ENCODE measurements at regions of chr9 and their contacts with region 1.

Region 1: GRCh38 chr9:105881654-105882349 is 187.5 kb downstream of the TMEM38B start:
- DNase-seq: peak; percentile 26 to 71 (median 59)
- ATAC-seq: no peak
- H3K4me3 ChIP-seq: no peak overlapping the region
- H3K4me3 Mint-ChIP-seq: no peak overlapping the region
- H3K27ac ChIP-seq: no peak overlapping the region
- H3K27ac Mint-ChIP-seq: no peak overlapping the region
- H3K4me1 ChIP-seq: no peaks in the 10 kb centered on the region
- H3K4me1 Mint-ChIP-seq: peaks cover 4% of the 10 kb centered on the region
- H3K27me3 ChIP-seq: no peaks in the 10 kb centered on the region
- H3K27me3 Mint-ChIP-seq: no peaks in the 10 kb centered on the region
- CTCF ChIP-seq: peak; percentile 74

Region 2: GRCh38 chr9:105608721-105609598 is 272.8 kb before region 1 on chr9:
- CTCF ChIA-PET with region 1: interaction called, 6 read pairs
- POLR2A ChIA-PET with region 1: no interaction called
- intact Hi-C with region 1: loop called (anchors 1 to 2 kb)
- DNase-seq: peak in 2 of 9 experiments; percentile 47 to 61
- ATAC-seq: no peak
- H3K4me3 ChIP-seq: no peak overlapping the region
- H3K4me3 Mint-ChIP-seq: no peak overlapping the region
- H3K27ac ChIP-seq: no peak overlapping the region
- H3K27ac Mint-ChIP-seq: no peak overlapping the region
- H3K4me1 ChIP-seq: no peaks in the 10 kb centered on the region
- H3K4me1 Mint-ChIP-seq: no peaks in the 10 kb centered on the region
- H3K27me3 ChIP-seq: no peaks in the 10 kb centered on the region
- H3K27me3 Mint-ChIP-seq: no peaks in the 10 kb centered on the region
- CTCF ChIP-seq: peak; percentile 70

Region 3: GRCh38 chr9:105842023-105842644 is 39.7 kb before region 1 on chr9:
- CTCF ChIA-PET with region 1: interaction called, 93 read pairs
- POLR2A ChIA-PET with region 1: no interaction called
- intact Hi-C with region 1: loop called (anchors 1 kb)
- DNase-seq: peak in 4 of 9 experiments; percentile 7 to 37 (median 10)
- ATAC-seq: no peak
- H3K4me3 ChIP-seq: no peak overlapping the region
- H3K4me3 Mint-ChIP-seq: no peak overlapping the region
- H3K27ac ChIP-seq: no peak overlapping the region
- H3K27ac Mint-ChIP-seq: no peak overlapping the region
- H3K4me1 ChIP-seq: no peaks in the 10 kb centered on the region
- H3K4me1 Mint-ChIP-seq: no peaks in the 10 kb centered on the region
- H3K27me3 ChIP-seq: no peaks in the 10 kb centered on the region
- H3K27me3 Mint-ChIP-seq: peaks cover 2% of the 10 kb centered on the region
- CTCF ChIP-seq: peak; percentile 83

Measured in CD8-positive, alpha-beta T cell (primary cell).